ENCODE measurements at regions of chr1 and their contacts with region 1.

Region 1: GRCh38 chr1:151993654-151994496 is at the start of gene S100A10:
- DNase-seq: peak; percentile 94
- H3K4me3 Mint-ChIP-seq: peak within 1 kb of the TSS; percentile 93
- H3K27ac Mint-ChIP-seq: peak within 1 kb of the TSS; percentile 98
- H3K4me1 Mint-ChIP-seq: peaks cover 49% of the 10 kb centered on the region
- H3K27me3 Mint-ChIP-seq: peaks cover 8% of the 10 kb centered on the region
- total RNA-seq, gene S100A10: 103 and 107 TPM in 2 replicates

Region 2: DNA sequence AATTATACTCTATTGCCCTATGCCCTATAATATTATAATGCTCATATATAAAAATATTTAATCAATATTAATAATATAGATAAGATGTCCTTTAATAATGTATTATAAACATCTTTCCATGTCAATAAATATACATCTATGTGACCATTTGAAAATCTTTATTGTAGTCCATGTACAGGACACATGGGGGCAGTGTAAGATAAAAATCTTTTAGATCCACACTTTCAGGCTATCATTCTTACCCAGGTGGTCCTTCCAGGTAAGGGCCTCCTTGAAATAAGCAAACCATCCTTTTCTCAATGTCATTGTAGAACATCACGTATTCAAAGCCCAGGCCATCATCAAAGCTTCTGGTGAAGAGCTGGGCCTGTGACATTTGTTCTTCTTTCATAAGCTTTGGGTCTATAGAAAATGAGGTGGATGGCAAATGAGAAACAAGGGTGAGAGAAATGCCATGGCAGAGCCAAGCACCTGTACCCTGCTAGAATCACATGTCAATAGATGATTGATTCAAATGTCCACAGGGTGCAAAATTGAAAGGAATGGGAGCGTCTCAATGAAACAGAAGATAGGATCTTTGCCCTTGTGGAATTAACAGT is 104.8 kb before region 1 on chr1:
- intact Hi-C with region 1: loop called (anchors 1 kb)
- DNase-seq: peak; percentile 60
- H3K4me3 Mint-ChIP-seq: no peak overlapping the region
- H3K27ac Mint-ChIP-seq: no peak overlapping the region
- H3K4me1 Mint-ChIP-seq: peaks cover 28% of the 10 kb centered on the region
- H3K27me3 Mint-ChIP-seq: no peaks in the 10 kb centered on the region

Region 3: GRCh38 chr1:151934048-151934493 is 59.8 kb before region 1 on chr1:
- intact Hi-C with region 1: loop called (anchors 1 kb)
- DNase-seq: peak; percentile 87
- H3K4me3 Mint-ChIP-seq: no peak overlapping the region
- H3K27ac Mint-ChIP-seq: no peak overlapping the region
- H3K4me1 Mint-ChIP-seq: peaks cover 5% of the 10 kb centered on the region
- H3K27me3 Mint-ChIP-seq: peaks cover 17% of the 10 kb centered on the region